Activated T-helper 1 cell treated with anti-CD3 and anti-CD28 coated beads, Interleukin-12 subunit alpha, Interleukin-12 subunit beta, Interleukin-2, Interleukin-4 antibody, amounts not matched to agents 30 ng/mL and 10 ng/mL and 1 ng/mL, durations not matched to agents 14 hours and 24 hours and 36 hours (primary cell): ENCODE measurements at regions of chr3 and their contacts with region 1.

Region 1: DNA sequence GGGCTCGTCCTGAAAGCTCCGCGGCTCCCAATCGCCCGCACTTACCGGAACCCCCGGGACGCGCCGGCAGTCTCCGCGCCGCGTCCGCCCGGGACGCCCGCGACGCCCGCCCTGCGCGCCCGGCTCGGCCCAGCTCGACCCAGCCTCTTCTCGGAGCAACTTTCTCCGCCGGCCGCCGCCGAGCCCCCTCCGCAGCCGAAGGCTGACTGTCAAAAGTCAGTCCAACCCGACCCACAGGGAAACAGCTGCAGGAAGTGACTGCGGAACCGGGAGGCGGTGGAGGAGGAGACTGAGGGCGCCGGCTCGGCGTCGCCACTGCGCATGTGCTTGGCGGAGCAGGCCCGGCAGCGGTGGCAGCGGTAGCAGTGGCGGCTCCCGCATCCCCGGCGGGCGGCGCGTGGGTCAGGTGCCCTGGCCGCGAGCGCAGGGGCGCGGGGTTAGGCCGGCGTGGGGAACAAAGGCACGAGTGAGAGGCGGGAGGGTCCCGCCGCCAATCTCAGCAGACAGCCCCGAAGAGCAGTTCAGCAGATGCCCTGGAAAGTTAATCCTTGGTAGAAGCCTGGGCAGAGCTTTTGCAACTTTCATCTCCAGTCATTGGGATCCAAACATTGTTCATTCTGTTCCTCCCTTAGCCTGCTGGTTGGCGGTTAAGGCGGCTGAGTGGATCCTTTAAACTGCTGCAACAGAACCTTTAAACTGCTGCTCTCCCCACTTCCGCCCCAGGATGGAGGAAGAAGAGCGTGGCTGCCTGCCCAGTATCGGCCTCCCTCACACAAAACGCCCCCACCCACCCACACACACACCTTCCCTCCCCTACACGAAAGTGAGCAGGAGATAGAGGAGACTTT is at the start of gene ZMAT3:
- DNase-seq: peak; percentile 84
- H3K4me3 Mint-ChIP-seq: peak within 1 kb of the TSS; percentile 98
- H3K27ac Mint-ChIP-seq: peak within 1 kb of the TSS; percentile 95
- H3K4me1 Mint-ChIP-seq: peaks cover 43% of the 10 kb centered on the region
- H3K27me3 Mint-ChIP-seq: peaks cover 3% of the 10 kb centered on the region
- total RNA-seq, gene ZMAT3: 16.9 and 17.3 TPM in 2 replicates

Region 2: GRCh38 chr3:179037351-179037750 is 34.4 kb before region 1 on chr3:
- intact Hi-C with region 1: loop called (anchors 2 kb)
- DNase-seq: peak; percentile 51
- H3K4me3 Mint-ChIP-seq: peak overlapping the region; percentile 69
- H3K27ac Mint-ChIP-seq: peak overlapping the region; percentile 79
- H3K4me1 Mint-ChIP-seq: peaks cover 15% of the 10 kb centered on the region
- H3K27me3 Mint-ChIP-seq: no peaks in the 10 kb centered on the region

Region 3: GRCh38 chr3:179083977-179084376 is 12.2 kb after region 1 on chr3:
- intact Hi-C with region 1: loop called (anchors 1 kb)
- DNase-seq: no peak
- H3K4me3 Mint-ChIP-seq: no peak overlapping the region
- H3K27ac Mint-ChIP-seq: peak overlapping the region; percentile 1
- H3K4me1 Mint-ChIP-seq: peaks cover 17% of the 10 kb centered on the region
- H3K27me3 Mint-ChIP-seq: no peaks in the 10 kb centered on the region

Region 4: DNA sequence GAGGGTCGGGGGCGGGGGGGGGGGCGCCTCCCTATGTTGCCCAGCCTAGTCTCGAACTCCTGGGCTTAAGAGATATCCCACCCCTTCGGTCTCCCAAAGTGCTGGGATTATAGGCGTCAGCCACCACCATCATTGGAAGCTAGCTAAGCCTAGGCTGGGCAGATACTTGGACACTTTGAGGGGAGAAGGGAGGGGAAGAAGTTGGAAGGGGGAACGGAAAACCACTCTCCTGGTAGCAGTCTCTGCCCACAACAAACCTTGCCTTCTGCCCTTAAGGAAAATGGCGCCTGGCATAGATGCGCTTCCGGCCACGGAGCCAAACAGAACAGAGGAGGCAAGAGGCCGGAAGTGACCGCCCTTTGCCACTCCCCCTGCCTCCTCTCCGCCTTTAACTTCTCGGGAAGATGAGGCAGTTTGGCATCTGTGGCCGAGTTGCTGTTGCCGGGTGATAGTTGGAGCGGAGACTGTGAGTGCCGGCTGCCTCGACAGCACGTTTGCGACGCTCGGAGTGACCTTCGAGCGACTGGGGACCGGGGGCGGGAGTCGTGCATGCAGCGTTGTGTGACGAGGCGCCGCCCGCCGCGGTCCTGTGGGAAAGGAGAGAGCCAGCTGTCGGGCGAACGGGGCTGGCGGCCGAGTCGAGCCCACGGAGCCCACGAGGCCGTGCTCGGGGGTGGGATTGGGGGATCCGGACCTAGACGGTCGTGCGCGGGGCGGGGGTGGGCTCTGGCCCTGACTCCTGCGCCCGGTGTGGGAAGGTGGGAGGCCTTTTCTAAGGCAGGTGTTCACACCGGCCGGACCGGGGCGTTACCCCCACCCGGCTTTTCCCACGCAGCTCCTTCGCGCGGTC is 275.8 kb after region 1 on chr3 and contains the start of gene MFN1:
- intact Hi-C with region 1: loop called (anchors 1 kb)
- DNase-seq: peak; percentile 87
- H3K4me3 Mint-ChIP-seq: peak within 1 kb of the TSS; percentile 98
- H3K27ac Mint-ChIP-seq: peak within 1 kb of the TSS; percentile 96
- H3K4me1 Mint-ChIP-seq: peaks cover 25% of the 10 kb centered on the region
- H3K27me3 Mint-ChIP-seq: no peaks in the 10 kb centered on the region
- total RNA-seq, gene MFN1: 29.5 and 37.7 TPM in 2 replicates